Activated T-helper 1 cell treated with anti-CD3 and anti-CD28 coated beads, Interleukin-12 subunit alpha, Interleukin-12 subunit beta, Interleukin-2, Interleukin-4 antibody, amounts not matched to agents 30 ng/mL and 10 ng/mL and 1 ng/mL, durations not matched to agents 14 hours and 24 hours and 36 hours (primary cell): ENCODE measurements at regions of chr12 and their contacts with region 1.

Region 1: DNA sequence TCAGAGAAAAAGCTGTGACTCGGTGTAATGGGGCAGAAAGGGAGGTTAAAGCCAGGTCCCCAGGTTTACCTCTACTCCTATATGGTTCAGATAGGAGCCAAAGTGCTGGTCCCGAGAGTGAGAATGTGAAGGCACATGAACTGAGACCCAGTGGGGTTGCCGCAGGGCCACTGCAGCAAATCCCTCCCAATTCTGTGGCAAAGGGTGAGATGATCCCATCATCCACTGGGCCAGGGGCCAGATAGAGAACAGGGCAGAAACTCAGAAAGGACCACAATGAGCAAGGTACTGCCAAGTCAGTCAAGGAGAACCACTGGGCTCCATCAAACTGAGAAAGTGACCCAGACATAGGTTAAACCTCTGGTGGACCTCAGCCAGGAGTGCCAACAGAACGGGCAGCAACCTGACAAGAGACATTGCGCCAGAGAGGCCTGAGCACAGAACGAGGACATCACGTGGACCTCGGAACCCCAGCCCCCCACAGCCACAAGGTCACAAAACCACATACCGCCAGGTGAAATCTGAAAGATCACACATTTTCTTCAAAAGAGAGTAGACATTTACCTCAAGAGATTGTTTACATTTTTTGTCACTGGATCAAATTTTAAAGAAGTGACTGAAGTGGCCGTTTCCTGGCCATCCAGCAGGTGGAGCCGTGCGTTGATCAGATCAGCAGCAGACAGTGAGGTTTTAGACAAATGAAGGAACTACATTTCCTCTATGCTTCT is 20.5 kb upstream of the ITPR2 start:
- DNase-seq: peak; percentile 50
- H3K4me3 Mint-ChIP-seq: no peak overlapping the region
- H3K27ac Mint-ChIP-seq: no peak overlapping the region
- H3K4me1 Mint-ChIP-seq: no peaks in the 10 kb centered on the region
- H3K27me3 Mint-ChIP-seq: peaks cover 14% of the 10 kb centered on the region

Region 2: DNA sequence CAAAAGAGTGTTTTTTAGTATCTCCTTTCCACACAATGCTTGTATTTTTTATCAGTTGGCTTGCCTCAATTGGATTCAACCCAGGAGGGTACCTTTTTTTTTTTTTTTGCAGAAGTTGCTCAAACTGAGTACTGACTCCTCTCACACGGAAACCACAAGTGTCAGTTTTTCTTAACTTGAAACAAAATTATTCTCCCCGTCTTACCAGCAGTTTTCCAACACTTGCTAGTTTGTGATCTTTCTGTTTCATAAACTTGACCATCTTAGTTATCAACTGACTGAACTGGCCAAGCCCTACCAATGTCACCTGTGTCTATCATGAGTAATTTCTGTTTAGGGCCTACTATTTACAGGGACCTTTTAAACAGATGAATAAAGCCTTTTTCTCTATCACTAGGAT is 13.6 kb after region 1 on chr12:
- intact Hi-C with region 1: loop called (anchors 1 kb)
- DNase-seq: no peak
- H3K4me3 Mint-ChIP-seq: no peak overlapping the region
- H3K27ac Mint-ChIP-seq: no peak overlapping the region
- H3K4me1 Mint-ChIP-seq: peaks cover 24% of the 10 kb centered on the region
- H3K27me3 Mint-ChIP-seq: peaks cover 2% of the 10 kb centered on the region

Region 3: DNA sequence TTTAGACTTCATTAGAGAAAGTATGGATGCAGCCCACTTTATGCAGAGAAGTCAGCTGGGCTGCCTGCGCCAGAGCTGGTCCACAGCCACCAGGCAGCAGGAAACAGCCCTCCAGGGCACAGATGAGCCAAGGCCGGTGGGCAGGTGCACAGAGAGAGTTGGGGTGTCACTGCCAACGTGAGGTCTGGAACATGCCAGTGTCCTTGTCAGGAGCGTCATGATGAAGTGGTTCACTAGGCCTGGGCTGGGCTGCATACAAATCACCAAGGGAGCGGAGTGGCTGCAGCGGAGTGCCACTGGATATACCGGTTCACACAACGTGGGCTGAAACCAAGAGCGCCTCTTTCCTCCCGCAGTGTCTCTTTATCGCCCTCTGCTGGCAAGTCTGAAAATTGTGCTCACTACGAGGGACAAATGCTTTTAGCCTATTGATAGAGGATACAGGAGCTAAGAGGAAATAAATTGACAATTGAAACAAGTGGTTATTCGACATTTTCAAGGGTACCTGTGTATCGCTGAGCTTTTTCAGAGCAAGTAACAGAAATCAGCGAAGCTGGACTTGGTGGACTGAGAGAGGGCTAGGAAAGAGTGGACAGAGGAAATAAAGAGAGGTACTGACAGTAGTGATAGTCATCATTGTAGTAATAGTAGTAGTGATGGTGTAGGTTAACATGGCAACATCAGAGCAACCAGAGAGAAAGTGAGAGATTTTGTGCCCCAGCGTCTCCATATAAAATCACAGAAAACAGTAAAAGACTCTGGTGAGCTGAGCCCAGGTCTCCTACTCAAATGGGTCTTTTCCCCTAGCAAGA is 31.5 kb after region 1 on chr12:
- intact Hi-C with region 1: loop called (anchors 1 kb)
- DNase-seq: peak; percentile 78
- H3K4me3 Mint-ChIP-seq: peak overlapping the region; percentile 23
- H3K27ac Mint-ChIP-seq: no peak overlapping the region
- H3K4me1 Mint-ChIP-seq: peaks cover 8% of the 10 kb centered on the region
- H3K27me3 Mint-ChIP-seq: peaks cover 16% of the 10 kb centered on the region

Region 4: GRCh38 chr12:27305673-27306456 is 452.4 kb after region 1 on chr12:
- intact Hi-C with region 1: loop called (anchors 5 kb)
- DNase-seq: no peak
- H3K4me3 Mint-ChIP-seq: no peak overlapping the region
- H3K27ac Mint-ChIP-seq: no peak overlapping the region
- H3K4me1 Mint-ChIP-seq: peaks cover 14% of the 10 kb centered on the region
- H3K27me3 Mint-ChIP-seq: no peaks in the 10 kb centered on the region

Region 5: DNA sequence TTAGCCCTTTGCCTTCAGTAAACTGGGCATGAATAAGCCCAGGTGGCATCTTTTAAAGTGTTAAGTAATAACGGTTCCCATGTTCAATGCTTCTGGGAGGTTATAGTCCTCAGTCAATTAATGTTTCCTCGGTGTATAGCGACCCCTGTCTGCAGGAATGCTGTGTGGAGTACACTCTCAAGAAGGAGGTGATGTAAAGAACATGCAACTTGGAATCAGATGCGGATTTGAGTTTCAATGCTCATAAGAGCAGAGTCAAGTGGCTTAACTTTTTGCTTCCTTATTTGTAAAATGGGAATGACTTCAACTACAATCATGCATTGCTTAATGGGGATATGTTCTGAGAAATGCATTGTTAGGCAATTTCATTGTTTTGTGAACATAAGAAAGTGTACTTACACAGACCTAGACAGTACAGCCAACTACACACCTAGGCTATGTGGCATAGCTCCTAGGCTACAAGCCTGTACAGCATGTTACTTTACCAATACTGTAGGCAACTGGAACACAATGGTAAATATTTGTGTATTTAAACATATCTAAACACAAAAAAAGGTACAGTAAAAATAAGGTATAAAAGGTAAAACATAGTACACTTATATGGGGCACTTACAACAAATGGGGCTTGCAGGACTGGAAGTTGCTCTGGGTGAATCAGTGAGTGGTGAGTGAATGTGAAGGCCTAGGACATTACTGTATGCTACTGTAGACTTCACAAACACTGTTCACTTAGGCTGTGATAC is 850.4 kb after region 1 on chr12:
- intact Hi-C with region 1: loop called (anchors 10 kb)
- DNase-seq: peak; percentile 62
- H3K4me3 Mint-ChIP-seq: no peak overlapping the region
- H3K27ac Mint-ChIP-seq: no peak overlapping the region
- H3K4me1 Mint-ChIP-seq: no peaks in the 10 kb centered on the region
- H3K27me3 Mint-ChIP-seq: peaks cover 11% of the 10 kb centered on the region